ENCODE measurements at regions of chr3 and their contacts with region 1.

Region 1: GRCh38 chr3:129490242-129491045 is 38.0 kb upstream of the RHO start:
- DNase-seq: peak; percentile 82
- ATAC-seq: peak; percentile 96
- H3K4me3 ChIP-seq: no peak overlapping the region
- H3K27ac ChIP-seq: no peak overlapping the region
- H3K4me1 ChIP-seq: peaks cover 4% of the 10 kb centered on the region; the same call in 1 of the 2 replicates
- H3K27me3 ChIP-seq: no peaks in the 10 kb centered on the region
- CTCF ChIP-seq: peak; percentile 94

Region 2: GRCh38 chr3:129558772-129559564 is 68.5 kb after region 1 on chr3:
- CTCF ChIA-PET with region 1: no interaction called
- POLR2A ChIA-PET with region 1: no interaction called
- in situ Hi-C with region 1: no loop called
- intact Hi-C with region 1: loop called (anchors 5 kb)
- DNase-seq: no peak
- ATAC-seq: no peak
- H3K4me3 ChIP-seq: no peak overlapping the region
- H3K27ac ChIP-seq: peak overlapping the region; percentile 49
- H3K4me1 ChIP-seq: peaks cover 20% of the 10 kb centered on the region
- H3K27me3 ChIP-seq: no peaks in the 10 kb centered on the region
- CTCF ChIP-seq: no peak

Region 3: DNA sequence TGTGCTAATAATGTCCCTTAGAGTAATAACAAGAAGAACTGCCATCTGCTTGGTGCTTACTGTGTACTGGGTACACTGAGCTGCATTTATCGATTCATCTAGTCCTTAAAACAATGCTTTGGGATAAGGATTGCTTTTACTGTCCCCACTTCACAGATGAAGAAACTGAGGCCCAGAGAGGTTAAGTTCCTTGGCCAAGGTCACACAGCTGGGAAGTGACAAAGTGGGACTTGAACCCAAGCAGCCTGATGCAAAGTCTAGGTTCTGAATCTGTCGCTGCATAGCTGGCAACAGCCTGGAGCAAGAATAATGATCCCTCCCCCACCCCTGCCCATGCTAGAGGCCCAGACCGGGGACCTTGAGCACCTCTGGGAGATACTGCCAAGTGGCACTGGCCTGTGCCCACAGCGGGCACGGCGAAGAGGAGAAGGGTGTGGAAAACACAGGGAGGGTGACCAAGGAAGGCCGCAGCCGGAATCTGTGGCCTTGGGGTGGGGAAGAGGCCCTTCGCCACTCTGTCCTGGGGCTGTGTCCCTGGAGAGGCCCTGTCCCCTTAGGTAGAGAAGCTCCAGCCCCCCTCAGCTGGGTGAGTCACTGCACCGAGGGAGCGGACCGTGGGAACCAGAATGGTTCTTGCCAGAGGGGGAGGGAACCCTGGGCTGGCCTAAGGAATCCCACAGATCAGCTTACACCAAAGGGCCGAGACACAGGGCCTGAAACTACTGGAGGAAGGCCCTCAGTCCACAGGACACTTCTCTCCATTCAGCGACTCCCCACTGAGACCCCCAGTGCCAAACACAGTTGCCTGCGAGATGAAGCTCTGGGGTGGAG is 112.5 kb after region 1 on chr3:
- CTCF ChIA-PET with region 1: interaction called, 11 read pairs
- POLR2A ChIA-PET with region 1: no interaction called
- in situ Hi-C with region 1: no loop called
- intact Hi-C with region 1: loop called (anchors 2 kb)
- DNase-seq: no peak
- ATAC-seq: peak; percentile 13
- H3K4me3 ChIP-seq: peak overlapping the region; percentile 57 to 92
- H3K27ac ChIP-seq: peak overlapping the region; percentile 99
- H3K4me1 ChIP-seq: peaks cover 61% of the 10 kb centered on the region
- H3K27me3 ChIP-seq: no peaks in the 10 kb centered on the region
- CTCF ChIP-seq: no peak

Region 4: GRCh38 chr3:129627429-129628168 is 137.2 kb after region 1 on chr3:
- CTCF ChIA-PET with region 1: interaction called, 4 read pairs
- POLR2A ChIA-PET with region 1: no interaction called
- in situ Hi-C with region 1: no loop called
- intact Hi-C with region 1: loop called (anchors 1 kb)
- DNase-seq: peak; percentile 55
- ATAC-seq: peak; percentile 53
- H3K4me3 ChIP-seq: peak overlapping the region; percentile 59 to 77
- H3K27ac ChIP-seq: peak overlapping the region; percentile 97
- H3K4me1 ChIP-seq: peaks cover 36% of the 10 kb centered on the region
- H3K27me3 ChIP-seq: no peaks in the 10 kb centered on the region
- CTCF ChIP-seq: no peak

Region 5: GRCh38 chr3:129824926-129825541 is 334.6 kb after region 1 on chr3:
- CTCF ChIA-PET with region 1: interaction called, 14 read pairs
- POLR2A ChIA-PET with region 1: no interaction called
- in situ Hi-C with region 1: no loop called
- intact Hi-C with region 1: loop called (anchors 5 kb)
- DNase-seq: peak; percentile 47
- ATAC-seq: peak; percentile 87
- H3K4me3 ChIP-seq: no peak overlapping the region
- H3K27ac ChIP-seq: no peak overlapping the region
- H3K4me1 ChIP-seq: no peaks in the 10 kb centered on the region
- H3K27me3 ChIP-seq: no peaks in the 10 kb centered on the region
- CTCF ChIP-seq: peak; percentile 87

Region 6: GRCh38 chr3:129934234-129935123 is 444.0 kb after region 1 on chr3:
- CTCF ChIA-PET with region 1: no interaction called
- POLR2A ChIA-PET with region 1: no interaction called
- in situ Hi-C with region 1: no loop called
- intact Hi-C with region 1: loop called (anchors 5 kb)
- DNase-seq: peak; percentile 35
- ATAC-seq: peak; percentile 75
- H3K4me3 ChIP-seq: peak overlapping the region; percentile 34 to 69
- H3K27ac ChIP-seq: no peak overlapping the region
- H3K4me1 ChIP-seq: no peaks in the 10 kb centered on the region
- H3K27me3 ChIP-seq: no peaks in the 10 kb centered on the region
- CTCF ChIP-seq: peak; percentile 97